ENCODE measurements at regions of chr14 and their contacts with region 1.

Region 1: DNA sequence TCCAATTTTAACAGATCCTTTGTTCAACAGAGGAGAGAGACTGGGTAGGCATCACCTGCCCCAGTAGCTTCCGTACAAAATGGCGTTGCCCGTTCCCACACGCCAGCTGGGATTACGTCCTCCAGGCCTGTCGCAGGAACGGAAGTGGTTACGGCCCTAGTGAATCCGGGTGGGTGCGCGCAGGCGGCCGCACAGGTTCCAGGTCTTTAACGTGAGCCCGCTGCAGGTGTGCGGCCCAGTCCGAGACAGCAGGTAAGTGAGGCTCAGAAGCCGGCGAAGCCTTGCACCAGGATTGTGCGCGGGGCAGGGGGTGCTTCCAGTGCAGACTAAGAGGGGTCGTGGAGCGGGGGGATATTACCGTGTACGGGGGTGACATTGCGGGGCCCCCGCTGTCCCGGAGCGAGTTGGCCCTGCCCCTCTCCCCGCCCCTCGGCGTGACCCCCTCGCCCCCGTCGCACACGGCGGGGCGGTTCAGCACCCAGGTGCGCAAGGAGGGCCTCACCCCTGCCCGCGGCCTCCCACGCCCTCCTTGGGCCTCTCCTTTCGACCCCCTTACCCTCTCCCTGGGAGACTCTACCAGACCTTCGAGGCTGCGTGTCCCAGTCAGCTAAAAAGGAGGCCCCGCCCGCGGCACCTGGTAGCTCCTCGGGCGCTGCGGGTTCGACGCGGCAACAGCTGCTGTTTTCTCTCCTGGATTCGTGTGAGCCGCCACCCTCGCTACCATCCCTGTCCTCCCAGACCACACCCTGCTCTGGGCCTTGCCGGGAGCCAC is at the start of gene EXD2:
- DNase-seq: peak; percentile 94
- H3K4me3 ChIP-seq: peak within 1 kb of the TSS; percentile 73 to 97 (median 88)
- H3K27ac ChIP-seq: peak within 1 kb of the TSS; percentile 77 to 85 (median 82)
- H3K4me1 ChIP-seq: peaks cover 0 to 11% (median 11%) of the 10 kb centered on the region in 4 donors
- H3K27me3 ChIP-seq: no peaks in the 10 kb centered on the region
- CTCF ChIP-seq: no peak
- EP300 ChIP-seq: no peak
- POLR2A ChIP-seq: no peak
- total RNA-seq, gene EXD2: 19.7 to 34.2 (median 28.0) TPM

Region 2: DNA sequence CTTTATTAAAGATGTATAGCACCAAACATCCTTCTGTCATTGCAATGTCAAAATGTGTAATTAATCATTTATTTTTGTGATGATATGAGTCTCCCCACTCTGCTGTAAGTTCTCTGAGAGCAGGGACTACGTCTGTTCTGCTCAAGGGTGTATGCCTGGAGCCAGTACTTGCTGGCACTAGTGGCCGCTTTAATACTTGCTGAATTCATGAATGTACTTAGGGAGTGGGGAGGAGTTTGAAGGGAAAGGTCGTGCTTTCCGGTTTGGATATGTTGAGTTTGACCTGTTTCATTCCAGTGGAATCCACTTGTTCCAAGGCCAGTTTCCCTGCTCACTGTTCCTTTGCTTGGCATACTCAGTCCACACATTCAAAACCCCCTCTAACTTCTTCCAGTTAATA is 36.7 kb before region 1 on chr14:
- intact Hi-C with region 1: loop called (anchors 5 kb)
- DNase-seq: no peak
- H3K4me3 ChIP-seq: no peak overlapping the region
- H3K27ac ChIP-seq: peak overlapping the region in 2 of 4 donors; percentile 10 to 97
- H3K4me1 ChIP-seq: peaks cover 13 to 27% (median 24%) of the 10 kb centered on the region in 4 donors
- H3K27me3 ChIP-seq: no peaks in the 10 kb centered on the region
- CTCF ChIP-seq: no peak
- EP300 ChIP-seq: no peak
- POLR2A ChIP-seq: no peak

Measured in esophagus muscularis mucosa (tissue), 4 donors.